ENCODE measurements at regions of chr6 and their contacts with region 1.

Region 1: DNA sequence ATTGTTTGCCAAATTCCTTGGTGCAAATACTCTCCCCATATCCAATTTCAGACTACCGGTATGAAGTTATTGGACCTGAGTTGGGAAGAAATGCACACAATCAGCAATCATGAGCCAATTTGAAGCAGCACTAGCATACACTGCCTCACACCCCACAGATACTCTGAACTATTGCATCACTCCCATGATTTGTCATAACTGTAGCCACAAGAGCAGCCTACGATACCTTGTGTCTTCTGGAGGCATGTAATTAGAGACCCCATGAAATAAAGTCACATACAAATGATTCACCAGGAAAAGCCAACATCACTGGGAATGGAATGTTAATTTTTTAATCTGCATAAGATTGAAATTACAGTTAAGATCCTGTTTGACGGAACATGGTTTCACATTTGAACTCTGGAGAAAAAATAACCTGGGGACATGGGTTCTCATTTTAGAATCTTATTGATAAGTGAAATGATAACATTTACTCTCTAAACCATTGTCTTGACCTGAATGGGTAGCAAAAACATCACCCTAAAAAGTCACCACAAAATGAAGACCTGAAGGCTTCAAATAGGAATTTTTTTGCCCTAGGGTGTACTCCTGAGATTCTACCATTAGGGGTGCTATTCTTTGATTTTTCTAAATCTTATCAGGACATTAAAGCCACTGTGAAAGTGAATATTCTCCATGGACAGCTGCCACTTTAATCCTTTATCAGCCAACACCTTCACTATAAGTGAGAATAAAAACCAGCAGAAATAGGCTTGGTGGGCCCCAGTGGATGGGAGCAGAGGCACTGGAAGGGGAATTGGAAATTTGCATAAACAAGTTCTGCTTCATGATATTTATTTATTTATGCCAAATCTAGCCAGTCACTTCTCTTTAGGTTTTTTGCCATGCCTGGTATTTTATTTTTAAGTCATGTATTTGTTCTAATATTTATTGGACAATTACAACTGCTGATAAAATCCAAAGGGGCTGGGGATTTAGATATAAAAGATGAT is 34.5 kb upstream of the HBS1L start:
- DNase-seq: peak; percentile 56
- H3K4me3 Mint-ChIP-seq: peak overlapping the region; percentile 34
- H3K27ac Mint-ChIP-seq: peak overlapping the region; percentile 75
- H3K4me1 Mint-ChIP-seq: peaks cover 83% of the 10 kb centered on the region
- H3K27me3 Mint-ChIP-seq: no peaks in the 10 kb centered on the region

Region 2: GRCh38 chr6:135014353-135014832 is 74.7 kb before region 1 on chr6:
- CTCF ChIA-PET with region 1: no interaction called
- POLR2A ChIA-PET with region 1: no interaction called
- intact Hi-C with region 1: loop called (anchors 1 kb)
- DNase-seq: peak; percentile 17
- H3K4me3 Mint-ChIP-seq: peak overlapping the region; percentile 32
- H3K27ac Mint-ChIP-seq: peak overlapping the region; percentile 70
- H3K4me1 Mint-ChIP-seq: peaks cover 48% of the 10 kb centered on the region
- H3K27me3 Mint-ChIP-seq: no peaks in the 10 kb centered on the region

Region 3: DNA sequence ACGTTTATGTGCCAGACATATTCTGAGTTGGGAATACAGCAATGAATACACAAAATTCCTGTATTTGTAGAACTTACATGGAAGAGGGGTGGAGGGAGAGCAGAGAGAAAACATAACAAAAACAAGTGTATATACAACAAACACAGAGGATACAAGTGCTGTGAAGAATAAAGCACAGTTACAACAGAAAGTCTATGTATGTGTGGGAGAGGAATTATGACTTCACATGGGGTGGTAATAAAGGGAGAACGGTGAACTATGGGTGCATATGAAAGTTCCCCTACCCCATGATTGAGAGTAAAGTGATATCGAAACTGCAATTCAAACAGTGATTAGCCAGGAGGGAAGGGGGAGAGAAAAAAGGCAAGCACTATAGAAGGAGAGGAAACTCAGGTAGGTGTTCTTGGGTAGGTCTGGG is 59.0 kb before region 1 on chr6:
- CTCF ChIA-PET with region 1: interaction called, 3 read pairs
- POLR2A ChIA-PET with region 1: no interaction called
- intact Hi-C with region 1: loop called (anchors 1 kb)
- DNase-seq: no peak
- H3K4me3 Mint-ChIP-seq: peak overlapping the region; percentile 0
- H3K27ac Mint-ChIP-seq: peak overlapping the region; percentile 52
- H3K4me1 Mint-ChIP-seq: peaks cover 58% of the 10 kb centered on the region
- H3K27me3 Mint-ChIP-seq: no peaks in the 10 kb centered on the region

Region 4: GRCh38 chr6:135044639-135045038 is 44.5 kb before region 1 on chr6:
- CTCF ChIA-PET with region 1: no interaction called
- POLR2A ChIA-PET with region 1: no interaction called
- intact Hi-C with region 1: no loop called
- DNase-seq: no peak
- H3K4me3 Mint-ChIP-seq: no peak overlapping the region
- H3K27ac Mint-ChIP-seq: no peak overlapping the region
- H3K4me1 Mint-ChIP-seq: peaks cover 58% of the 10 kb centered on the region
- H3K27me3 Mint-ChIP-seq: no peaks in the 10 kb centered on the region

Region 5: GRCh38 chr6:135054569-135055498 is 34.3 kb before region 1 on chr6 and contains the start of gene HBS1L:
- CTCF ChIA-PET with region 1: interaction called, 9 read pairs
- POLR2A ChIA-PET with region 1: interaction called, 25 read pairs
- intact Hi-C with region 1: loop called (anchors 1 kb)
- DNase-seq: peak; percentile 98
- H3K4me3 Mint-ChIP-seq: peak within 1 kb of the TSS; percentile 92
- H3K27ac Mint-ChIP-seq: peak within 1 kb of the TSS; percentile 96
- H3K4me1 Mint-ChIP-seq: peaks cover 34% of the 10 kb centered on the region
- H3K27me3 Mint-ChIP-seq: no peaks in the 10 kb centered on the region
- total RNA-seq, gene HBS1L: 117 to 123 TPM

Region 6: DNA sequence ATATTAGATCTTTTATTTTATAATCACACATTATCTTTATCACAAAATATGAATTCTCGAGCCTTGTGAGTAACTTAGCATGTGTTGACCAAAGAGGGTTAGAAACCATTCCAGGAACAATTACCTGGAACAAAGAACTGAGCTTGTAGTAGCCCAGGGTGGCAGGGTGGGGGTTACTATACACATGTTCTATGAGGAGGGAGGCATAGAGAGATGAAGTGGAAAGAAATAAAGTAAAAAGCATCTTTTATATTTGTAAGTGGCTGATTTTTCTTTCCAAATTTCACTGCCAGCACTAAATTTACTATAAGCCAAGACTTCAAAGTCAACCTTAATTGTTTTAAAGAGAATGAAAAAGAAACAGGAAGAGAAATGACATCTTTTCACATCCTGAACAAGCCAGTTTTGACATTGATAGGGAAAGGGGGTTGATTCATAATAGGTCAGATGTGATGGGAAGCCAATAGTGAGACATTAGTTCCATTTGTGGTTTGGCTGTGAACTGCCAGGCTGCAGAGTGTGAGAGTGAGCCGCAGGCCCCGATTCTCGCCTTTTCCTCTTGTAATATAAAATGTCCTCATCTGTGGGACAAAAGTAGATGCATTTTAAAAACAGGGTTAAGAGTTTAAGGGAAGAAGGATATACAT is 39.3 kb after region 1 on chr6:
- CTCF ChIA-PET with region 1: interaction called, 10 read pairs
- POLR2A ChIA-PET with region 1: interaction called, 6 read pairs
- intact Hi-C with region 1: loop called (anchors 1 kb)
- DNase-seq: peak; percentile 82
- H3K4me3 Mint-ChIP-seq: peak overlapping the region; percentile 24
- H3K27ac Mint-ChIP-seq: peak overlapping the region; percentile 81
- H3K4me1 Mint-ChIP-seq: peaks cover 42% of the 10 kb centered on the region
- H3K27me3 Mint-ChIP-seq: no peaks in the 10 kb centered on the region

Region 7: DNA sequence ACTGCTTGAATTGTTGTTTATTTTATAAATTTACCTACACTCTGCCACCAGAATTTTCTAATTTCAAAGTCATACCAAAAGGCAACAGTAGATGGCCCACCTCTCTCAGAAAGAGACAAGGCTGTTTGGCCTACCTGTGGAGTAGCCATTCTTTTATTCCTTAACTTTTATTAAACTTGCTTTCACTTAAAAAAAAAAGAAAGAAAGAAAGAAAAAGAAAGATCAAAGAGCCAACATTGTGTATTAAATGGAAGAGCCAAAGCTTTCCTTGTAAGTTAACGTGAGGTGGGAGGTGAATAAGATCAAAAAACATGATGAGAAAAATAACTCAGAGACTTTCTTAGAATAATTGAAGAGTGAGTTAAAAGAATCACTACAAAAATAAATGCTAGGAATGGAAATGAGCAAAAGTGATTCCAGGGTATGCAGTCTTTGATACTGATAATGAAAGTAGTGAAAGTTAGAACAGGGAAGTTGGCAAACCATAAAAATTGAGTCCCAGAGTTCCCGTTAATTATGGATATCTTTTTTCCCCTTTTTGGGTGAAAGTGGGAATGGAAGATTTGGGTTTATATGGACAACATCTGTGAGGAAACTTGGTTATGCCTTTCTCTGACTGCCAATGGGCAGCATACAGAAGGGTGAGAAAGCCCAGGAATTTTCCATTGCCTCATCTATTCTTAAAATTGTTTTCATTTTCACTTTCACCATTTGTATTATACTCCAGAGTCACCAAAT is 56.1 kb after region 1 on chr6:
- CTCF ChIA-PET with region 1: interaction called, 3 read pairs
- POLR2A ChIA-PET with region 1: no interaction called
- intact Hi-C with region 1: loop called (anchors 1 kb)
- DNase-seq: no peak
- H3K4me3 Mint-ChIP-seq: no peak overlapping the region
- H3K27ac Mint-ChIP-seq: peak overlapping the region; percentile 39
- H3K4me1 Mint-ChIP-seq: peaks cover 53% of the 10 kb centered on the region
- H3K27me3 Mint-ChIP-seq: peaks cover 2% of the 10 kb centered on the region

Region 8: GRCh38 chr6:135162678-135163439 is 73.7 kb after region 1 on chr6:
- CTCF ChIA-PET with region 1: interaction called, 3 read pairs
- POLR2A ChIA-PET with region 1: no interaction called
- intact Hi-C with region 1: loop called (anchors 1 kb)
- DNase-seq: peak; percentile 54
- H3K4me3 Mint-ChIP-seq: peak overlapping the region; percentile 49
- H3K27ac Mint-ChIP-seq: peak overlapping the region; percentile 78
- H3K4me1 Mint-ChIP-seq: peaks cover 61% of the 10 kb centered on the region
- H3K27me3 Mint-ChIP-seq: peaks cover 3% of the 10 kb centered on the region

Measured in activated CD4-positive, alpha-beta memory T cell treated with anti-CD3 and anti-CD28 coated beads for 36 hours (primary cell).